IMR-90 (cell line): ENCODE measurements at regions of chr16 and their contacts with region 1.

Region 1: DNA sequence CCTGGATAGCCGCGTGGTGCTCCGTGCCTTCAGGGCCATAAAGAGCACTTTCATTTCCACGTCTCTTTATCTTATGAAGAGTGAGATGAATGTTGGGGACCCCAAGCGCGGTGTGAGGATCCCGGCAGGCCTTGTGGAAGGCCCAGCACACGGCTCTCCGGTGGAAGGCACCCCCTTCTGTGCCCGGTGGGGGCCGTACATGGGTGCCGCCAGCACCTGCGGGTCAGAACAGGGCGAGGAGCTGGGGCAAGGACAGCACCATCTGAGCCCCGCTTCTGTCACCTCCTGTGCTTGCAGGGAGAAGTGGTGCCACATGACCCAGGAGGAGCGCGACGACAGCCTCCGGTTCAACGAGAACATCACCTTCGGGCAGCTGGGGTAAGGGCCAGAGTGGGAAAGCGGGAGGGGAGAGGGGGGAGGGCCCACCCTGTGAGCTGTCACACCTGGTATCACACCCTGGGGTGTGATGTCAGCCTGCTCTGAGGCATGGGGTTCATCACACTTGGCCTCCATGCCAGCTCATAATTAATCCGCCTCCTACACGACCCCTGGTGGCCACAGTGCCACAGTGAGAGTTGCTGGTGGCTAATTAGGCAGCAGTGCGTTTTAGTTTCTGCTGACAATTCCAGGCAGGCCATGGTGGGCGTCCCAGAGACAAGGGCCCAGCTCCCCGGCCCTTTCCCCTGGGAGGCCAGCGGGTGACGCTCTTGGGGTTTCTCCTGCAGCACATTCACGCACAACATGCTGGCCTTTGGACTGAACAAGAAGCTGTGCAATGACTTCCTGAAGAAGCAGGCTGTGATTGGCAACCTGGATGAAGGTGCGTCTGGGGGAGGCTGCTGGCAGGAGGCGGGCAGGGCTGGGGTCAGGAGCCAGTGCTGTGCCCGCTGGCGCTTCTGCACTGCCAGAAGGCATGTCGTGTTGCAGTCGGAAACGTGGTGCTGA is 25.7 kb downstream of the CIBAR2 start:
- DNase-seq: peak; percentile 46
- ATAC-seq: peak; percentile 60
- H3K4me3 ChIP-seq: no peak overlapping the region
- H3K27ac ChIP-seq: no peak overlapping the region
- H3K4me1 ChIP-seq: peaks cover 2% of the 10 kb centered on the region; the same call in 1 of the 2 replicates
- H3K27me3 ChIP-seq: no peaks in the 10 kb centered on the region
- CTCF ChIP-seq: peak; percentile 63
- POLR2A ChIP-seq: no peak
- RAD21 ChIP-seq: peak; percentile 67

Region 2: DNA sequence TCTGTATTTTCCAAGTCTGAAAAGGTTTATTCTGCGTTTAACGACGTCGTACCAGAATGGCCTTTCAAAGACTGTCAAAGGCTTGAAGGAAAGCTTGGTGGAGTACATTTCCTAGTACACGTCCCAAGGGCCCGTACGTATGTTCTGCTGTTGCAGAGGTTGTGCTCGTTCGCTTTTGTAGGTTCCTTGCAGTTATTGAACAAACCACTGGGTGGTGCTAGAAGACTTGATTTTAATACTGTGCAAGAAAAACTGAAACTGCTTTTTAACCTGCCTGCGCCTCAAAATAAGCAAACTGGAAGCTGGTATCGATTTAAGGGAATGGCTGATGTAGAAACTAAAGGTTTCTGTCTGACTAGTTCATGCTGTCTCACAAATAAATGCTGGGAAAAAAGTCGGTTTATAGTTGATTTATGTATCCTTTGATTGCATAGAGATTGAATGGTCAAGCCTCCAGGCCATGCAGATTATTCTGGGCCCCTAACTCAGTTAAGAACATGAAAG is 332.2 kb before region 1 on chr16:
- CTCF ChIA-PET with region 1: no interaction called
- POLR2A ChIA-PET with region 1: no interaction called
- dilution Hi-C with region 1: no loop called
- in situ Hi-C with region 1: no loop called
- intact Hi-C with region 1: loop called (anchors 10 kb)
- DNase-seq: peak; percentile 93
- ATAC-seq: peak; percentile 87
- H3K4me3 ChIP-seq: no peak overlapping the region
- H3K27ac ChIP-seq: peak overlapping the region; percentile 23; the same call in 1 of the 2 replicates
- H3K4me1 ChIP-seq: peaks cover 27% of the 10 kb centered on the region
- H3K27me3 ChIP-seq: no peaks in the 10 kb centered on the region
- CTCF ChIP-seq: peak; percentile 83
- POLR2A ChIP-seq: 0 out of 2 replicates have a peak, but pooled peaks have one; percentile 23
- RAD21 ChIP-seq: peak; percentile 85

Region 3: DNA sequence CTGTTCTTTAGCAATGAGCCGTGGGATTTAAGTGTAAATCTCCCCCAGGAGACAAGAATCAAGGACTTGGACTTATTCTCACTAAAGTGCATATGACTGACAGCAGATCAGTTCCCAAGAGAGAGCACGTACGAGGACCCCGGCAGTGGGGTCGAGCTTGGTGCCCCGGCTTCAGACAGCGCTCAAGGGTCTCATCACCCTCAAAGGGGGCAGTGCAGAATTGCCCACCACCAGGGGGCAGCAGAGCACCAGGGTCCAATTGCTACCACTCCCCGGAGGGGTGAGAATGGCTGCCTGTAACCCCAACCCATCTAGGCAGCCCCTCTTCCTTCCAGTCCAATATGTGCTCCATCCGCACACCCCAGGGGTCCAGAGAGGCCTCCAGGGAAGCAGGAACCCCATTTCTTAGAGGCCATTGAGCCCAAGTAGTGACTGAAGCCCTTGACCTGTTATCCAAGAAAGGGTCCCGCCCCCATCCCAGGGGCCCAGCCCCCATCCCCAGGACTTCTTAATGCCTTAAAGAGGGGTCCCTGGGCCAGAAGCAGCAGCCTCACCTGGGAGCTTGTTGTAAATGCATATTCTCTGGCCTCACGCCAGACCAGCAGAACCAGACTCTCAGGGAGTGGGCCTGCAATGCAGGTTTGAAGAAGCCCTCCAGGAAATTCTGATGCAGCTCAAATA is 161.4 kb before region 1 on chr16:
- CTCF ChIA-PET with region 1: no interaction called
- POLR2A ChIA-PET with region 1: no interaction called
- dilution Hi-C with region 1: no loop called
- in situ Hi-C with region 1: no loop called
- intact Hi-C with region 1: loop called (anchors 2 kb)
- DNase-seq: no peak
- ATAC-seq: no peak
- H3K4me3 ChIP-seq: no peak overlapping the region
- H3K27ac ChIP-seq: no peak overlapping the region
- H3K4me1 ChIP-seq: peaks cover 8% of the 10 kb centered on the region; the same call in 1 of the 2 replicates
- H3K27me3 ChIP-seq: no peaks in the 10 kb centered on the region
- CTCF ChIP-seq: peak; percentile 63
- POLR2A ChIP-seq: no peak
- RAD21 ChIP-seq: peak; percentile 75

Region 4: DNA sequence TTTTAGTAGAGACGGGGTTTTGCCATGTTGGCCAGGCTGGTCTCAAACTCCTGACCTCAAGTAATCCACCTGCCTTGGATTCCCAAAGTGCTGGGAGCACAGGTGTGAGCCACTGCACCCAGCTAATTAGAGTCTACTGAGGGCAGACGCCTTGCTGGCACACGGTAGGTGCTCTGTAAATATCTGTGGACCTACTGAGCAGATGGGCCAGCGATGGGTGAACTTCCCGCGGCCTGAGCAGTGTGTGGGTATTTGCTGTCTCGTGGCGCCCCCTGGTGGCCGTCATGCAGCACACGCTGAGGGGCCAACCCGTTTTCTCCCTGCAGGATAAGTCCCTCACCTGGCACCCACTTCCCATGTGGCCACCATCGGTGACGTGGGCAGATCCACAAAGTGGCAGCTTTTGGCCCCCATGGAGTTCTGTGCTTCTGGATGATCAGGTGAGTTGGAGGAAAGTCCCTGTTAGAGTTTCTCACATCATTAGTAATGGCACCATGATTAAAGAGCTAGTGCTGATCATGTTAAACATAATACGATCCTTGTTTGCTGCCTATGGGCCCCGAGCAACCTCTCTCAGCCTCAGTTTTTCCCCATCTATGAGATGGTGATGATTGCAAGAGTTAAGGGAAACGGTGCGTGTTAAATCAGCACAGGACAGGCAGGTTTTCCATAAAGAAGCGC is 116.0 kb before region 1 on chr16:
- CTCF ChIA-PET with region 1: no interaction called
- POLR2A ChIA-PET with region 1: no interaction called
- dilution Hi-C with region 1: no loop called
- in situ Hi-C with region 1: no loop called
- intact Hi-C with region 1: no loop called
- DNase-seq: peak; percentile 76
- ATAC-seq: peak; percentile 84
- H3K4me3 ChIP-seq: no peak overlapping the region
- H3K27ac ChIP-seq: no peak overlapping the region
- H3K4me1 ChIP-seq: peaks cover 7% of the 10 kb centered on the region
- H3K27me3 ChIP-seq: no peaks in the 10 kb centered on the region
- CTCF ChIP-seq: peak; percentile 83
- POLR2A ChIP-seq: no peak
- RAD21 ChIP-seq: peak; percentile 91